Common myeloid progenitor, CD34-positive (primary cell): ENCODE measurements at regions of chr4 and their contacts with region 1.

Region 1: DNA sequence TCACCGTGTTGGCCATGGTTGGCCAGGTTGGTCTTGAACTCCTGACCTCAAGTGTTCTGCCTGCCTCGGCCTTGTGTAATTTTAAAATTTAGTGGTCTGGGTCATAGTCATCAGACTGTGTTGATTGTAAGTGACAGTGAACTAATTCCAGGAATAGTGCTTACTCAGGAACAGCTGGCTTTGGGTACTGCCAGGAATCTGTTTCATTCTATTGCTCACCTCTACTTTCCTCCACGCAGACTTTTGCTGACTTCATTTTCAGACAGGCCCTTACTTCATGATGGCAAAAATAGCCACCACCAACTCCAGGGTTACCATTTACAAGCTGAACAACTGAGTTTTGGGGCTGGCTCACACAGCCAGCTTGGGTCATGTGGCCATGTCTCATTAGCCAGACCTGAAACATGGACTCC is 54.6 kb downstream of the FNIP2 start:
- DNase-seq: no peak
- H3K4me3 ChIP-seq: no peak overlapping the region
- H3K27ac ChIP-seq: no peak overlapping the region
- H3K4me1 ChIP-seq: peaks cover 13 to 80% (median 36%) of the 10 kb centered on the region in 4 experiments
- H3K27me3 ChIP-seq: no peaks in the 10 kb centered on the region

Region 2: DNA sequence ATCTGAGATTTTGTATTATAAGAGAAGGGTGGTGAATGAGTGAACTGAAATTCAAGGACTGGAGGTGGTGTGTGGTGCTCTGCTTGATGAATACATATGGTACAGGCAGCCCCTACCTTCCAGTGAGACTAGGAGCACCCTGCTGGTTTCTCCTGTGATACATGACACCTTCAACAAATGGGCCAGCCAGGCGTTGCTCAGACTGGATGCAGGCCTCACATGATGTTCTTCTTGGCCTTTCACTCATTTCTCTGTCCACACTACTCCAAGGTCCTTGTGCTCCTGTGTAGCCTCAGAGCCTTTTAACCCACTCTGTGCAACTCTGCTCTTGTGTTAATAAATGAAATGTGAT is 12.5 kb after region 1 on chr4:
- CTCF ChIA-PET with region 1: interaction called, 14 read pairs
- POLR2A ChIA-PET with region 1: no interaction called
- DNase-seq: no peak
- H3K4me3 ChIP-seq: no peak overlapping the region
- H3K27ac ChIP-seq: no peak overlapping the region
- H3K4me1 ChIP-seq: no peaks in the 10 kb centered on the region
- H3K27me3 ChIP-seq: no peaks in the 10 kb centered on the region